ENCODE measurements at regions of chr1 and their contacts with region 1.

Region 1: DNA sequence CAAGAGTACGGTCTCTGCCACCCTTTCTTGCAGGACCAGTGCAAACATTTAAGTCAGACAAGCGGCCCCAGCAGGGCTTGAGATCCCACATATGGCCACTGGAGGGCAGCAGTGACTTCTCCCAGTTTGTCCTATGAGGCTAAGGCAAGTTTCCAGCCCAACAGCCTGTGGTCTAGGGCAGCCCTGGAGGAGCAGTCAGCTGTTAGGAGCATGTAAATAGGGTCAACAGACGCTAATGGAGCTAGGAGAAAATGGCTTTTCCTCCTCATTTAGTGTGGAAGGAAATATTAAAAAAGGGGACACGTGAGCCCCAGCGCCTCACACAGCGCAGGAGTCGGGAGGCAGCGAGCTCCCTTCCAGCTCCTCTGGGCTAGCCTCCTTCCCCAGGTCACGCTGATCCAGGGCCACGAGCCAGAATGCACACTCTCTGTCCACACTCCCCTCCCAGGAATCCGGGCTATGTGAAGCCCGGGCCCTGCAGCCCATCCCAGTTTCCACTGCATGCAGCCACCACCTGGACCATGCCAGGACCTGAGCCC is 95.6 kb downstream of the LAMC2 start:
- DNase-seq: peak; percentile 77 to 91
- H3K4me3 ChIP-seq: no peak overlapping the region
- H3K27ac ChIP-seq: peak overlapping the region; percentile 45; the same call in 1 of the 2 replicates
- H3K4me1 ChIP-seq: peaks cover 54% of the 10 kb centered on the region
- H3K27me3 ChIP-seq: no peaks in the 10 kb centered on the region
- CTCF ChIP-seq: peak; percentile 96

Region 2: GRCh38 chr1:182889997-182890396 is 391.6 kb before region 1 on chr1:
- CTCF ChIA-PET with region 1: no interaction called
- POLR2A ChIA-PET with region 1: no interaction called
- intact Hi-C with region 1: loop called (anchors 5 kb)
- DNase-seq: no peak
- H3K4me3 ChIP-seq: no peak overlapping the region
- H3K27ac ChIP-seq: no peak overlapping the region
- H3K4me1 ChIP-seq: peaks cover 13% of the 10 kb centered on the region
- H3K27me3 ChIP-seq: no peaks in the 10 kb centered on the region
- CTCF ChIP-seq: no peak

Region 3: DNA sequence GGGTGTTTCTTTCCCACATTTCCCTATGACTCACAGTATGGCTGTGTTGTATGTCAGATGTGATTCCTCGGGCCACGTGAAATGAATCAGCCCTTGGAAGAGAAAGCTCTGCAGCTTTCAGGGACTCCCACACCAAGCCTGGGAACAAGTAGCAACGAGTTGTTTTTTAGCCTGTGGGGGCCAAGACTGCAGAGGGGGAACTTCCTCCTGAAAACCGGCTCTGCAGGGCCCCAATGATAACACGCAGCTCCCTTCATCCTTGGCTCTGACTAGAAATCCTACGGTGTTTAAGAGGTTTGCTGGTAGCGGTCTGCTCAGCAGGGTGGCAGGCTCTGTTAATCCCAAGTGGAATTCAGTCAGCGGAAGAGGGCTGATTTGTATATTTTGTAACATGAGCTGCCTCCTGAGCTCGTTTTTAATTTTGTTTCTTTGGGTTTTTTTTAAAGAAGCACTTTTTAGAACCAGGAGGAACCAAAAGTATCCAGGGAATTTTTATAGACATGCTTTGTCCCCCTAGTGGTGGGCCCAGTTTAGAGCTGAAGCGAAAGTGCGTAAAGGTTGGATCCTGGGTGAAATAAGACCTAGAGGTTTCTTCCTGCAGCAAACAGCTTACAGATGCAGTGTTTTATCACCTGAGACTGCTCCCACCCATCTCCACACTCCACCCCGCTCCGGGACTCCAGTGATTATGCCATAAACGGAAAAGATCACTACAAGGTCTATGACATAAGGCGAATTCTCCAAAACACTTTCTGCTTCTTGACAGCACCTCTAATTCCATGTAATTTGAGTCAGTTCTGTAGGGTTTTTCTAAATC is 46.8 kb before region 1 on chr1:
- CTCF ChIA-PET with region 1: interaction called, 9 read pairs
- POLR2A ChIA-PET with region 1: interaction called, 12 read pairs
- intact Hi-C with region 1: loop called (anchors 1 kb)
- DNase-seq: peak; percentile 81 to 96
- H3K4me3 ChIP-seq: peak overlapping the region; percentile 45; the same call in 1 of the 2 replicates
- H3K27ac ChIP-seq: peak overlapping the region; percentile 92
- H3K4me1 ChIP-seq: peaks cover 41% of the 10 kb centered on the region
- H3K27me3 ChIP-seq: no peaks in the 10 kb centered on the region
- CTCF ChIP-seq: peak; percentile 77

Region 4: GRCh38 chr1:183411091-183411490 is 129.5 kb after region 1 on chr1:
- CTCF ChIA-PET with region 1: no interaction called
- POLR2A ChIA-PET with region 1: no interaction called
- intact Hi-C with region 1: no loop called
- DNase-seq: peak; percentile 43 to 95
- H3K4me3 ChIP-seq: no peak overlapping the region
- H3K27ac ChIP-seq: peak overlapping the region; percentile 77
- H3K4me1 ChIP-seq: peaks cover 30% of the 10 kb centered on the region
- H3K27me3 ChIP-seq: no peaks in the 10 kb centered on the region
- CTCF ChIP-seq: no peak

Region 5: GRCh38 chr1:183514235-183514634 is 232.6 kb after region 1 on chr1:
- CTCF ChIA-PET with region 1: interaction called, 11 read pairs
- POLR2A ChIA-PET with region 1: no interaction called
- intact Hi-C with region 1: no loop called
- DNase-seq: no peak
- H3K4me3 ChIP-seq: no peak overlapping the region
- H3K27ac ChIP-seq: peak overlapping the region; percentile 88
- H3K4me1 ChIP-seq: peaks cover 34% of the 10 kb centered on the region
- H3K27me3 ChIP-seq: no peaks in the 10 kb centered on the region
- CTCF ChIP-seq: no peak

Region 6: DNA sequence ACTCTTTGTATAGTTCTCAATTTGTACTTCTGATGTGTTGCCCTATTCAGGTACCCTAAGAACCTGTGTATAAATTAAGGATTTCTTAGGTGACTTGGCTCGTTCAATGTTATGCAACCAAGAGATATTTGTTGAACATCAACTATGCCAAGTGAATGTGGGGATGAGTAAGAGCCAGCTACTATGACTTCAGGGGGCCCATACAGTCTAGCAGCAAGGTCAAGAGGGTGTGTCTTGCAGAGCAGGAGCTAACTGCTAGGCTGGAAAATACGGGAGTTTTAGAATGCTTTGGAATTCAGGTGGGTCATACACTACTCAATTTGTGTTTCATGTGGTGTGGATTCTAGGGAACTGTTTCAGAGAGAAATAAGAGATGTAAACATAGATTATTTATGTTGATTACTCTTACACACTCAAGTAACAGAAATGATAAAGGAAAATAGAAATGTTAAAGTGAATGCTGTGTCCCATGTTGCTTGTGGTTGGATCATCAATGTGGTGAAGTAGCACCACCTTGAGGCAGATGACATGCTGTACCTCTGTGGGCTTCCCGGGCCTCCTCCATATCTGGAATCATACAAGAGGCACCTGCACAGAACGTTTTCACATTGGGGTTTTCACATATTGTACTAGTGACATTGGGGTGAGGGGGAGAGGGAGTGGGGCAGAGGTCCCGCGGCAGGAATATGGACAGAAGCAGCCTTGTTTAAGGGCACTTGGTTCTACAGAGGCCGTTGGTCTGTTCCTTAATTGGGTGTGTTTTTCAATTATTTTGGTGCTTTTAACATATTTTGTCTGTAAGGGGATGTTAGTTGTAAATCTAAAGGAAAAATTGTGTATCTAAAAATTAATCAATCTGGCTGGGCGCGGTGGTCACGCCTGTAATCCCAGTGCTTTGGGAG is 341.5 kb after region 1 on chr1:
- CTCF ChIA-PET with region 1: interaction called, 3 read pairs
- POLR2A ChIA-PET with region 1: no interaction called
- intact Hi-C with region 1: loop called (anchors 1 kb)
- DNase-seq: peak; percentile 60 to 65
- H3K4me3 ChIP-seq: no peak overlapping the region
- H3K27ac ChIP-seq: peak overlapping the region; percentile 64
- H3K4me1 ChIP-seq: peaks cover 33% of the 10 kb centered on the region
- H3K27me3 ChIP-seq: no peaks in the 10 kb centered on the region
- CTCF ChIP-seq: peak; percentile 87

Region 7: GRCh38 chr1:183685112-183685713 is 403.6 kb after region 1 on chr1:
- CTCF ChIA-PET with region 1: no interaction called
- POLR2A ChIA-PET with region 1: no interaction called
- intact Hi-C with region 1: loop called (anchors 2 kb)
- DNase-seq: peak; percentile 17 to 51
- H3K4me3 ChIP-seq: no peak overlapping the region
- H3K27ac ChIP-seq: no peak overlapping the region
- H3K4me1 ChIP-seq: peaks cover 8% of the 10 kb centered on the region; the same call in 1 of the 2 replicates
- H3K27me3 ChIP-seq: no peaks in the 10 kb centered on the region
- CTCF ChIP-seq: peak; percentile 88